ENCODE measurements at regions of chr19 and their contacts with region 1.

Region 1: GRCh38 chr19:48674921-48675824 is 2.4 kb upstream of the NTN5 start:
- DNase-seq: peak; percentile 76 to 84
- ATAC-seq: peak; percentile 85 to 95 (median 90)
- H3K4me3 ChIP-seq: peak overlapping the region; percentile 11
- H3K27ac ChIP-seq: no peak overlapping the region
- H3K4me1 ChIP-seq: peaks cover 9% of the 10 kb centered on the region
- H3K27me3 ChIP-seq: no peaks in the 10 kb centered on the region
- CTCF ChIP-seq: peak; percentile 88

Region 2: GRCh38 chr19:48553676-48554386 is 121.3 kb before region 1 on chr19:
- intact Hi-C with region 1: no loop called
- DNase-seq: peak; percentile 33 to 61
- ATAC-seq: peak in 2 of 4 donors; percentile 24 to 35
- H3K4me3 ChIP-seq: no peak overlapping the region
- H3K27ac ChIP-seq: no peak overlapping the region
- H3K4me1 ChIP-seq: no peaks in the 10 kb centered on the region
- H3K27me3 ChIP-seq: peaks cover 0 to 5% (median 3%) of the 10 kb centered on the region in 3 donors
- CTCF ChIP-seq: no peak

Region 3: DNA sequence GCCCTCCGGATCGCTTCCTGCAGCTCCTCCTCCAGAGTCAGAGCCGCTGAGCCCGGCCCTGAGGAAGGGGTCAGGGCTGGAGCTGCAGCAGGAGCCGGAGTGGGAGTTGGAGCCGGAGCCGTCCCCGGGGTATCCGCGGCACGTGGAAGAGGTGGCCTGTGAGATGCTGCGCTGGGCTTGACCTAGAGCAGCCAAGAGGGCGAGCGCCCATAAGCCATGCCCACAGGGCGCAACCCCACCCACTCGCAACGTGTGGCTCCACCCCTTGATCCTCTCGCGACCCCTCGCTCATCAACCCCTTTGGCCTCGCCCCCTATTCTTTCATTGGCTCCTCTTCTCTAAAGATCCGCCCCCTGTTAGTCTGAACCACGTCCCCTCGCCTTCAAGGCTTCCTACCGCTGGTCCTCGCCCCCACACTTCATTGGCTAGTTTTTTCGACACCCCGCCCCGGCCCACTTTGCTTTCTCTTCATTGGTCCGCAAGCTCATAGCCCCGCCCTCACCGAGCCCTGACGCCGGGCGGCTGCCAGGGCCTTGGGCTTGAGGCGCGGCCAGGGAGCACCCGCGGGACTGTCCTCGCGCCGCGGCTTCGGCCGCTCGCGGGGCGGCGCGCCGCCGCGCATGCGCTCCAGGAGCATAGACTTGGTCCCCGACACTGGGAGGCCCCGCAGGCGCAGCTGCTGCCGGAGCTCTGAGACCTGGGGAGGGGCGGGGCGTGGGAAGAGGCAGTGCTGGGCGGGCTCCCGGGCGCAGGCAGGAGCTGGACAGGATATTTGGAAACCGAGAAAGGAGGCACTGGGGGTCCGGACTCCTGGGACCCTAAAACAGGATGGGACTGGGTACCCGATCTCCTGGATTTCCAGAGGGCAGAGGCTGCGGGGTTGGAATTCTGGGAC is 38.9 kb after region 1 on chr19:
- intact Hi-C with region 1: loop called (anchors 5 kb)
- DNase-seq: peak; percentile 99 to 100
- ATAC-seq: peak; percentile 82 to 90 (median 89)
- H3K4me3 ChIP-seq: peak overlapping the region; percentile 78
- H3K27ac ChIP-seq: peak overlapping the region; percentile 91
- H3K4me1 ChIP-seq: peaks cover 35% of the 10 kb centered on the region
- H3K27me3 ChIP-seq: no peaks in the 10 kb centered on the region
- CTCF ChIP-seq: no peak

Region 4: DNA sequence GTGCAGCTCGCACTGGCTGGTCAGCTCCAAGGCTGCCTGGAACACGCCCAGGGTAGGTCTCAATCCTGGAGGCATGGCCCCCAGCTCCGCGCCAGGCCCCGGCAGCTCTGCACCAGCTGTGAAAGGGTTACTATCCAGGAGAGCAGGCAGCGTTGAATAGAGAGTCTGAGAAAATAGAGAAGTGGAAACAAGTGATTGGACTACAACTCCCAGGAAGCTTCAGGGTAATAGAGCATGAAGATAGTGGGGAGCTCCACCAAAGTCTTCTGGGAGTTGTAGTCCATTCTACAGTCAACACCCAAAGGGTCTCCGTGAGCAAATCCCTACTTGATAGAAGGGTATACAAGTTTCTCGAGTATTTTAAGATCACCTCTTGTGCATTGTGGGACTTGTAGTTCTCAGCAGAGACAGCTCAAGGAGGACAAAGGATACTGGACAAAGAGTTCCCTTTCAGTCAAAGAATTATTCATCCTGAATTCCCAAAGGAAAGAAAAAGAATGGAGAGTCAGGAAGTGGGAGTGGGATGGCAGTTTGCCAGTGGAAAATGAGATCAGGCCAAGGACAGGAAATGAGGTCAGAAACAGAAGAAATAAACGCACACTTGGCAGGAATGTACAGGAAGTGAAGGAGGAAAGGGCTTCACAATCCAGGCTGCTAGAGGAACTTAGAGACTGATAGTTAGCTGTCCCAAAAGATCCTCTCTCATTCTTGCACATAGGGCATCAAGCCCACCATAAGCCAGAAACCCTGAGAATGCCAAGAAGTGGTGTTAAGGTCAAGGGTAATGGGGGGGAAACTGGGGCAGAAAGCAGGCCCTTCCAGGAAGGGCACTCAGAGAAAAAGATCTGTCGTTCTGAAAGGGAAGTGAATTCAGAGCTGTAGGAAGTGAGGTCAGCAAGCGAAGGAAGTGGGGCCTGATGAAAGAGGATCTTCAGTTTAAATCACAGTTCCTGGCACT is 49.9 kb after region 1 on chr19:
- intact Hi-C with region 1: no loop called
- DNase-seq: peak in 1 of 2 donors; percentile 65
- ATAC-seq: peak in 2 of 4 donors; percentile 27 to 28
- H3K4me3 ChIP-seq: no peak overlapping the region
- H3K27ac ChIP-seq: peak overlapping the region; percentile 70
- H3K4me1 ChIP-seq: peaks cover 5% of the 10 kb centered on the region
- H3K27me3 ChIP-seq: no peaks in the 10 kb centered on the region
- CTCF ChIP-seq: no peak

Region 5: GRCh38 chr19:48738557-48739399 is 63.6 kb after region 1 on chr19:
- intact Hi-C with region 1: loop called (anchors 5 kb)
- DNase-seq: peak; percentile 94 to 96
- ATAC-seq: peak; percentile 91 to 94 (median 92)
- H3K4me3 ChIP-seq: peak overlapping the region; percentile 68
- H3K27ac ChIP-seq: peak overlapping the region; percentile 78
- H3K4me1 ChIP-seq: peaks cover 5% of the 10 kb centered on the region
- H3K27me3 ChIP-seq: no peaks in the 10 kb centered on the region
- CTCF ChIP-seq: peak; percentile 47

Region 6: DNA sequence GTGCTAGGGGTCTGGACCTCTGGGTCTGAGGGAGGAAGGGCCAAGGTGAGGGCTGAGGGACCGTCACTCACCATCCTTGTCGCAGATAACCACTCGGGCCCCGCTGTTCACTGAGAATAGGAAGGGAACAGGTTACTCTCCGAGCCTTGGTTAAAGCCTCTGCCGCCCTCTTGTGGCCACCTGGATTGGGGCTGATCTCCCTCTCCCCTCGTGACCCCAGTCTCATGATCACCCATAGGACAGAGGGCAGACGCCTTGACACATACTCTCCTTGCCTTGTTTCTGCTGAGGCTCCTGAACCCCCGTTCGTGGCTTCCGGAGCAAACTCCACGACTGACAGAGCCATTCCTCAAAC is 160.5 kb after region 1 on chr19:
- intact Hi-C with region 1: loop called (anchors 10 kb)
- DNase-seq: peak; percentile 95 to 97
- ATAC-seq: peak; percentile 98 to 100 (median 98)
- H3K4me3 ChIP-seq: peak overlapping the region; percentile 44
- H3K27ac ChIP-seq: no peak overlapping the region
- H3K4me1 ChIP-seq: no peaks in the 10 kb centered on the region
- H3K27me3 ChIP-seq: no peaks in the 10 kb centered on the region
- CTCF ChIP-seq: peak; percentile 91

Region 7: GRCh38 chr19:48842789-48843162 is 167.6 kb after region 1 on chr19:
- intact Hi-C with region 1: loop called (anchors 10 kb)
- DNase-seq: no peak
- ATAC-seq: peak; percentile 61 to 71 (median 63)
- H3K4me3 ChIP-seq: no peak overlapping the region
- H3K27ac ChIP-seq: no peak overlapping the region
- H3K4me1 ChIP-seq: no peaks in the 10 kb centered on the region
- H3K27me3 ChIP-seq: no peaks in the 10 kb centered on the region
- CTCF ChIP-seq: peak; percentile 81